Astrocyte of the cerebellum (primary cell): ENCODE measurements at regions of chr11 and their contacts with region 1.

Region 1: GRCh38 chr11:119196833-119197483 is 9.2 kb upstream of the CBL start:
- DNase-seq: peak; percentile 78
- H3K4me3 ChIP-seq: no peak overlapping the region
- CTCF ChIP-seq: peak; percentile 84

Region 2: GRCh38 chr11:119134389-119134978 is 62.5 kb before region 1 on chr11:
- in situ Hi-C with region 1: loop called (anchors 10 kb)
- DNase-seq: no peak
- H3K4me3 ChIP-seq: no peak overlapping the region
- CTCF ChIP-seq: peak; percentile 63

Region 3: GRCh38 chr11:119284344-119285157 is 87.6 kb after region 1 on chr11:
- in situ Hi-C with region 1: loop called (anchors 5 kb)
- DNase-seq: peak; percentile 9
- H3K4me3 ChIP-seq: no peak overlapping the region
- CTCF ChIP-seq: peak; percentile 40